ENCODE measurements at regions of chr6 and their contacts with region 1.

Region 1: DNA sequence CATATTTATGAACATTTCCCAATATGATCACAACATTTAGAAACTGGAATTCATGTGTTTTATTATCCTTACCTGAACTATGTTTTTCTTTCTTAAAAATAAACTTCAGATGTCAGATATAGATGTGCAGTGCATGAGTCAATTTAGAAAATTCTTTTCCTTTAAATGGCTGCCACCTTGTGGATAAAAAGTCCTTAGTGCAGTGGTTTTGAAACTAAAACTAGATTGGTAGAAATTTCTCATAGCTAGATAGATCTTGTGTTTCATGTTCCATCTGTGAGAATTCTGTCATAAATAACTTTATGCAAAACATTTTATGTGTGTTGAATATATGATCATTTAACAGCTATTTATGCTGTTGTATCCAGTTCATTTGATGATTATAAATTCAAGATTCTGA is 134.9 kb downstream of the KLHL32 start:
- DNase-seq: no peak
- ATAC-seq: no peak
- H3K4me3 Mint-ChIP-seq: no peak overlapping the region
- H3K27ac Mint-ChIP-seq: no peak overlapping the region
- H3K4me1 Mint-ChIP-seq: no peaks in the 10 kb centered on the region
- H3K27me3 Mint-ChIP-seq: peaks cover 5% of the 10 kb centered on the region

Region 2: DNA sequence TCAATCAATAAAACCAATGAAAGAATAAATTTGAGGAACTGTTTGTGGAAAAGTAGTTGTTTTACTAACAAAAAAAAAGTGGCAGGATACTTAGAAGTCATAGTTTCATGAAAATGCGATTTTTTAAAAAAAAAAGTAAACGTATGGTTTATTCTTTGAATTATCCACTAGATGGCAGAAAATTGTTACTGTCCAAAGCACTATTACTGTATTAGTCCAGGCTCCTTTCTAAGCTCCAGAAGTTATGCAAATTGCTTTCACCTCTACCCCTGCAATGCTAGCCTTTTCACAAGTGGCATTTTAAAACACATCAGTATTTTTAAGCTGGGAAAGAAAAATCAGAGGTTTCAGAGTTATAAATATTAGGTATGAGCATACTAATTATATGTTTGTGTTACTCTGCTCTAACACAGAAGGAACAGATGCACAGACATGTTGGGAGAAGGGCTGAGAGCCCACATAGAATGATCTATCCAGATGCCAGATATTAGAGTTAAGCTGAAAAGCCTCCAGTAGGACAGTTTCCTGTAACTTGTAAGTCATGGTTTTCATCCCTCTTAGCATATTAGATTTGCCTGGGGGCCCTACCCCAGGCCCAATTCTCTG is 432.6 kb before region 1 on chr6:
- CTCF ChIA-PET with region 1: interaction called, 36 read pairs
- POLR2A ChIA-PET with region 1: no interaction called
- DNase-seq: no peak
- ATAC-seq: peak; percentile 51
- H3K4me3 Mint-ChIP-seq: no peak overlapping the region
- H3K27ac Mint-ChIP-seq: no peak overlapping the region
- H3K4me1 Mint-ChIP-seq: peaks cover 5% of the 10 kb centered on the region
- H3K27me3 Mint-ChIP-seq: peaks cover 12% of the 10 kb centered on the region

Region 3: DNA sequence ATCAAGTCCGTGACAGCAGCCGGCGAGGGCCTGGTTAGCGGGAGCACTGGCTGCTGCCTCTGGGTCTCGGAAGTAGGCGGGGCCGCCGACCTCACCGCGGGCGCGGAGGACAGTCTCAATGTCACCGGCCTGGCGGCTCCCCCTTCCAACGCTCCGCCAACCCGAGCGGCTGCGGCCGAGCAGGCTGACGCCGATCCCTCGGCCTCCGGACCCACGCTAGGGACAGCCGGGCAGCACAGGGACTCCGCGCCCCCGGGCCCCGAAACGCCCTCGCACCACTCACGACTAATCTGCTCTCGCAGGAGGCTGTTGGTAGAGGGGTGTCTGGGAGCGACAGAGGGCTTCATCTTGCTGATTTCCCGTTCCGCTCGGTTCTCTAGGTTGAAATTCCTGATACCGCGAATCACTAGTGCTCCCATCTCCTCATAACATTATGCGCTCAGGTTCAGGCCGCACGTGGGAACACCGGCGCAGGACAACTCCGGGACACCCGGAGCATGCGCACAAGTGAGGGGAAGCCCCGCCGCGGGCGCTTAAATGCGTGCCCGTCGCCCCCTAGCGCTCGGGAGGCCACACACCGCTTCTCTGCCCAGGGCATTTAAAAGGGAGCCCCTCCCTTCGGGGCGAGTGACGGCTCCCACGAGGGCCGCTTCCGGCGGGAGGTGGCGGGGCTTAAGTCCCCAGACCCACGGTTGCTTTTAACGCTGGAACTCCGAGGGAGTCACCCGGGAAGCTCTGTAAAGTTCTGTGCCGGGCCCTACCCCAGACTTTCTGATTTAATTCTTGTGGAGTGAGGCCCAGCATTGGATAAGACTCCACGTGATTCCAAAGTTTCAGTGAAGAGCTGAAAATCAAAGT is 161.9 kb before region 1 on chr6 and contains the start of gene NDUFAF4:
- CTCF ChIA-PET with region 1: interaction called, 26 read pairs
- POLR2A ChIA-PET with region 1: no interaction called
- DNase-seq: peak; percentile 96
- ATAC-seq: peak; percentile 93
- H3K4me3 Mint-ChIP-seq: peak within 1 kb of the TSS; percentile 84
- H3K27ac Mint-ChIP-seq: peak within 1 kb of the TSS; percentile 92
- H3K4me1 Mint-ChIP-seq: peaks cover 34% of the 10 kb centered on the region
- H3K27me3 Mint-ChIP-seq: peaks cover 12% of the 10 kb centered on the region
- total RNA-seq, gene NDUFAF4: 42.3 to 42.5 TPM

Region 4: DNA sequence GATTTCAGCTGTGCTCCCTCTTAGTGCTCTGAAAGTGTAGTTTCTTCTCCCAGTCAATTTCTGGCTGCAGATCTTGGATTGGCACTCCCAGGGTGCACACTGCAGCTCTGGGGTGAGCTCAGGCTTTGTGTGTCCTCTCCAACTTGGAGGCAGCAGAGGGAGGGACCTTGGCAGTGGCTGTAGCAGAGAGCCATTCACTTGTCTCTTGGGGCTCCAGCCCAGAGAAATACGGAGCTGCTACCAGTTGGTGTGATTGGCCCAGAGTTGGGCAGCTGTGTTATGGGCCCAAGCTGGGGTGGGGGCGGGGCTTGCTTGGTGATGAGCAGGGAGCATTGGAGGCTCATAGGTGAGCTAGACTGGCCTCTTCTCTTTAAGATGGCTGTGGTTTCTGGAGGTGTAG is 69.0 kb before region 1 on chr6:
- CTCF ChIA-PET with region 1: no interaction called
- POLR2A ChIA-PET with region 1: no interaction called
- DNase-seq: no peak
- ATAC-seq: no peak
- H3K4me3 Mint-ChIP-seq: no peak overlapping the region
- H3K27ac Mint-ChIP-seq: no peak overlapping the region
- H3K4me1 Mint-ChIP-seq: no peaks in the 10 kb centered on the region
- H3K27me3 Mint-ChIP-seq: no peaks in the 10 kb centered on the region

Region 5: GRCh38 chr6:97077380-97077779 is 17.9 kb after region 1 on chr6:
- CTCF ChIA-PET with region 1: interaction called, 11 read pairs
- POLR2A ChIA-PET with region 1: no interaction called
- DNase-seq: no peak
- ATAC-seq: no peak
- H3K4me3 Mint-ChIP-seq: no peak overlapping the region
- H3K27ac Mint-ChIP-seq: no peak overlapping the region
- H3K4me1 Mint-ChIP-seq: peaks cover 14% of the 10 kb centered on the region
- H3K27me3 Mint-ChIP-seq: no peaks in the 10 kb centered on the region

Region 6: GRCh38 chr6:97275809-97276208 is 216.3 kb after region 1 on chr6:
- CTCF ChIA-PET with region 1: no interaction called
- POLR2A ChIA-PET with region 1: no interaction called
- DNase-seq: no peak
- ATAC-seq: no peak
- H3K4me3 Mint-ChIP-seq: no peak overlapping the region
- H3K27ac Mint-ChIP-seq: no peak overlapping the region
- H3K4me1 Mint-ChIP-seq: peaks cover 25% of the 10 kb centered on the region
- H3K27me3 Mint-ChIP-seq: no peaks in the 10 kb centered on the region

Region 7: DNA sequence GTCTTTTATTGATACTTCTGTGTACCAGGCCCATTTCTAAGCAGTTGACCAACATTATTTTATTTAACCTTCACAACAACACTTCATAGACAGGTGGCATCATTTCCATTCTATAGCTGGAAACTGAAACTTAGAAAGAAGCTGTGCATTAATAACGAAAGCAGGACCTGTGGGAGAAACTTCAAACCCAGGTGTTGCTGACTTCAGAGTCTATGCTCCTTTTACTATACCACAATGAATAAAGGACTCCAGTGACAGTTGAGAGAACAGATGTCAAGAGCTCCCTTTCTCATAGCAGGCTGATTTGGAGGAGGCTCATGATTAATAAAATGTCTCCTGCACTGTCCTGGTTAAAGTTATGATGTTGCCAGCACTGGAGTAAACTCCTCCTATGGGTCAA is 1718.3 kb after region 1 on chr6:
- CTCF ChIA-PET with region 1: no interaction called
- POLR2A ChIA-PET with region 1: no interaction called
- DNase-seq: no peak
- ATAC-seq: no peak
- H3K4me3 Mint-ChIP-seq: no peak overlapping the region
- H3K27ac Mint-ChIP-seq: no peak overlapping the region
- H3K4me1 Mint-ChIP-seq: no peaks in the 10 kb centered on the region
- H3K27me3 Mint-ChIP-seq: peaks cover 22% of the 10 kb centered on the region